ENCODE measurements at regions of chr6 and their contacts with region 1.

Region 1: DNA sequence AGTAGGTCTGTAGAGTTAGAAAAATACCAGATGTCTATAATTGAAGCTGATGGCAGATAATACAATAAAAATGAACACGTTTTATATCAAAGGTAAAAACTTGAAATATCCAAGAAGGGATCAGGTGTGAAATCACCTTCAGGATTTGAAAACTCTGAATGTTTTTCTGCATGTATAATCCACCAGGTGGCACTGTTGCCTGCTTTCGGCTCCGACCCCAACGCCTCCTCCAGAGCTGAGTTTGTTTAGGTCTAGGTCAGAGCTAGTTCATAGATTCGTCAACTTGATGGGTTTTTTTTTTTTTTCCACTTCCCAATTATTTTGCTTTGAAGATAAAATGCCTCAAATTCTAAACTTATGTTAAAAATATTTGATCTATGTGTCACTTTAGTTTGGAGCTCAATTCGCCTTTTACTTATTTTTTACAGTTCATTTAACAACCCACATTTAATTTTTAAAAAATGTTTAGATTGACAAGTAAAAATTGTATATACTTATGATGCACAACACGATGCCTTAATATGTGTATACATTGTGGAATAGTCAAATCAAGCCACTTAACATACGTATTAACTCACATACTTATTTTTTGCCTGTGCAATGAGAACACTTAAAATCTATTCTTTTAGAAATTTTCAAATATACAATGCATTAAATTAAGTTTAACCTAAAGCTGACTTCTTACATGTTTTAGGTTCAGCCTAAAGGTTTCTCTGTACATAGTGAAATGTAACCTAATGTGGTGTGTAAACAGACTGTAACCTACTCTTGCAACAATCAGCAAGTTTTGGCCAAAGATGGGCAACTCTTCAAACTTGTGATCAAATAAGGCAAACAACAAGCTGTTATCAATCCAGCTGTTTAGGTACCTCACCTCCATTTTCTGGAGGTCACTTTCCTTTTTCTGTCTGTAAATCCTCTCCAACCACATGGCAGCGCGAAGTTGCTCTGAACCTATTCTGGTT is 39.4 kb upstream of the ENPP4 start:
- DNase-seq: peak; percentile 34
- ATAC-seq: peak; percentile 72; the same call in 1 of the 2 replicates
- H3K4me3 ChIP-seq: no peak overlapping the region
- H3K27ac ChIP-seq: no peak overlapping the region
- H3K4me1 ChIP-seq: no peaks in the 10 kb centered on the region
- H3K27me3 ChIP-seq: no peaks in the 10 kb centered on the region
- CTCF ChIP-seq: peak; percentile 68
- POLR2A ChIP-seq: no peak
- RAD21 ChIP-seq: peak; percentile 69

Region 2: GRCh38 chr6:46080111-46080510 is 10.3 kb before region 1 on chr6:
- CTCF ChIA-PET with region 1: interaction called, 12 read pairs
- POLR2A ChIA-PET with region 1: no interaction called
- dilution Hi-C with region 1: no loop called
- in situ Hi-C with region 1: no loop called
- intact Hi-C with region 1: no loop called
- DNase-seq: no peak
- ATAC-seq: no peak
- H3K4me3 ChIP-seq: no peak overlapping the region
- H3K27ac ChIP-seq: no peak overlapping the region
- H3K4me1 ChIP-seq: no peaks in the 10 kb centered on the region
- H3K27me3 ChIP-seq: no peaks in the 10 kb centered on the region
- CTCF ChIP-seq: no peak
- POLR2A ChIP-seq: no peak
- RAD21 ChIP-seq: no peak

Region 3: GRCh38 chr6:46410334-46410953 is 320.0 kb after region 1 on chr6:
- CTCF ChIA-PET with region 1: interaction called, 10 read pairs
- POLR2A ChIA-PET with region 1: no interaction called
- dilution Hi-C with region 1: no loop called
- in situ Hi-C with region 1: loop called (anchors 10 kb)
- intact Hi-C with region 1: loop called (anchors 1 kb)
- DNase-seq: peak; percentile 42
- ATAC-seq: no peak
- H3K4me3 ChIP-seq: no peak overlapping the region
- H3K27ac ChIP-seq: no peak overlapping the region
- H3K4me1 ChIP-seq: peaks cover 2% of the 10 kb centered on the region; the same call in 1 of the 2 replicates
- H3K27me3 ChIP-seq: peaks cover 4% of the 10 kb centered on the region; the same call in 1 of the 2 replicates
- CTCF ChIP-seq: peak; percentile 72
- POLR2A ChIP-seq: no peak
- RAD21 ChIP-seq: peak; percentile 69

Region 4: GRCh38 chr6:46626228-46626909 is 536.0 kb after region 1 on chr6:
- CTCF ChIA-PET with region 1: no interaction called
- POLR2A ChIA-PET with region 1: no interaction called
- dilution Hi-C with region 1: no loop called
- in situ Hi-C with region 1: no loop called
- intact Hi-C with region 1: loop called (anchors 2 kb)
- DNase-seq: peak; percentile 21
- ATAC-seq: peak; percentile 57; the same call in 1 of the 2 replicates
- H3K4me3 ChIP-seq: no peak overlapping the region
- H3K27ac ChIP-seq: no peak overlapping the region
- H3K4me1 ChIP-seq: no peaks in the 10 kb centered on the region
- H3K27me3 ChIP-seq: no peaks in the 10 kb centered on the region
- CTCF ChIP-seq: peak; percentile 57
- POLR2A ChIP-seq: no peak
- RAD21 ChIP-seq: peak; percentile 56

Region 5: GRCh38 chr6:46781478-46782378 is 691.3 kb after region 1 on chr6:
- CTCF ChIA-PET with region 1: no interaction called
- POLR2A ChIA-PET with region 1: no interaction called
- dilution Hi-C with region 1: no loop called
- in situ Hi-C with region 1: no loop called
- intact Hi-C with region 1: loop called (anchors 2 kb)
- DNase-seq: peak; percentile 50
- ATAC-seq: peak; percentile 66; the same call in 1 of the 2 replicates
- H3K4me3 ChIP-seq: no peak overlapping the region
- H3K27ac ChIP-seq: no peak overlapping the region
- H3K4me1 ChIP-seq: no peaks in the 10 kb centered on the region
- H3K27me3 ChIP-seq: no peaks in the 10 kb centered on the region
- CTCF ChIP-seq: peak; percentile 59
- POLR2A ChIP-seq: no peak
- RAD21 ChIP-seq: peak; percentile 56

Region 6: DNA sequence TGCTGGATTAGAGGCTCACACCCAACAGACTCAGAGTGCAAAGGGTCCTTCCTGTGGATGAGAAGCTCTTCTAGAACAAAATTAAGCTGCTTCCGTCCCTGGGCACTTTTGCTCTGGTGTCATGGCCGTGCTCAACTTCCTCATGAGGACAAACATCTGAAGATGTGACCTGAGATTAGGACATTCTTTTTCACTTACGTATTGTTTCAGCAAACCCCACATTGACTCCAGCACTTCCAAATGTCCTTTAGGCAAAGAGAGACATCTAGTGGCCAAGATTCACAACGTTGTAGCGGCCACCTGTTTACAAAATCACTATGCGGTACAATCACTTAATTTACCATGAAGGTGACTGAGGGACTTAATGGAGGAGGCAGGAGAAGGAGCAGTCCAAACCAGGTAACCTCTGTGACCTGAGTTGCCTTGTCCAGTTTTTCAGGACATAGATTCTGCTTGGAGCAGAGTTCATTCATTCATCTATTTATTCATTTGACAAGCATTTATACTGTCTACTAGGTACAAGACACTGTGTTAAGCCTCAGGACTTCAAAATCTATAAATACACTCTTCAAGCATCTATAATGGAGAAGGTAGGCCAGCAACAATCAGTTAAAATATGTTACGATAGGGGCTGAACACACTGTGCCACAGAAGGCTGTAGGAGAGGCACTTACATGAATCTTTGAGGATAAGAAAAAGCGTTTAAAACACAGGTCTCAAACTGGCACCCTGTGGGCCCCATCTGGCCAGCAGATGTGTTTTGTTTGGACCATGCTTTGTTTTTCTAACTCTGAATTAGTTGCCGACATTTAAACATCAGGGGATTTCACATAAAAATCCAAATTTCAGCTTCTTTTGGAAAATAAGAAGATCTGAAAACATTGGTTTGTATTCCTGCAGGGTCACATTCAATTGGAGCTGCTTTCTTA is 957.3 kb after region 1 on chr6:
- CTCF ChIA-PET with region 1: no interaction called
- POLR2A ChIA-PET with region 1: no interaction called
- dilution Hi-C with region 1: no loop called
- in situ Hi-C with region 1: no loop called
- intact Hi-C with region 1: loop called (anchors 1 kb)
- DNase-seq: peak; percentile 62
- ATAC-seq: peak; percentile 89
- H3K4me3 ChIP-seq: no peak overlapping the region
- H3K27ac ChIP-seq: no peak overlapping the region
- H3K4me1 ChIP-seq: no peaks in the 10 kb centered on the region
- H3K27me3 ChIP-seq: no peaks in the 10 kb centered on the region
- CTCF ChIP-seq: peak; percentile 71
- POLR2A ChIP-seq: no peak
- RAD21 ChIP-seq: peak; percentile 66

Measured in IMR-90 (cell line).